Right lobe of liver (tissue), 6 donors: ENCODE measurements at regions of chr1 and their contacts with region 1.

Region 1: DNA sequence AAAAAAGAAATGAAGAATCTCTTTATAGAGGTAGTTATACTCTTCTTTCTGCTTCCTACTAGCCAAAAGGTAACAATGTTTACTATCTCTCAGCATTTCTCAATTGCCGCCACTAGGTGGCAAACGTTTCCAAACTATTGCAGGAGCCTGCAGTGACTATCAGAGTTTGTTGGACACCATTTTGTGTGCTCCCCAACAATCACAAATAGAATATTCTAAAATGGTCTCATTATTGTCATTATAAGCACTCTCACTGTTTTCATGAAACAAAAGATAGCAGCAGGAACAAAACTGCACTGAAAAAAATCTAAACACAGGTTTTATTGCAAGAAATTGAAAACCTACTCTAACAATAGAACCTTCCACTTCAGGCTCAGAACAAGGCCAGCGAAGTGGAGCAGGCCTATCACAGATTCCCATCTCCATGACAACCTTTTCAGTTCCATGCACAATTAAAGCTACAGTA is 83.9 kb upstream of the PLPPR4 start:
- DNase-seq: peak in 2 of 3 donors; percentile 50 to 76
- ATAC-seq: peak; percentile 97 to 99 (median 99)
- H3K4me3 ChIP-seq: no peak overlapping the region
- H3K27ac ChIP-seq: no peak overlapping the region
- H3K4me1 ChIP-seq: no peaks in the 10 kb centered on the region
- H3K27me3 ChIP-seq: no peaks in the 10 kb centered on the region
- CTCF ChIP-seq: peak; percentile 81 to 87 (median 83)
- POLR2A ChIP-seq: no peak

Region 2: DNA sequence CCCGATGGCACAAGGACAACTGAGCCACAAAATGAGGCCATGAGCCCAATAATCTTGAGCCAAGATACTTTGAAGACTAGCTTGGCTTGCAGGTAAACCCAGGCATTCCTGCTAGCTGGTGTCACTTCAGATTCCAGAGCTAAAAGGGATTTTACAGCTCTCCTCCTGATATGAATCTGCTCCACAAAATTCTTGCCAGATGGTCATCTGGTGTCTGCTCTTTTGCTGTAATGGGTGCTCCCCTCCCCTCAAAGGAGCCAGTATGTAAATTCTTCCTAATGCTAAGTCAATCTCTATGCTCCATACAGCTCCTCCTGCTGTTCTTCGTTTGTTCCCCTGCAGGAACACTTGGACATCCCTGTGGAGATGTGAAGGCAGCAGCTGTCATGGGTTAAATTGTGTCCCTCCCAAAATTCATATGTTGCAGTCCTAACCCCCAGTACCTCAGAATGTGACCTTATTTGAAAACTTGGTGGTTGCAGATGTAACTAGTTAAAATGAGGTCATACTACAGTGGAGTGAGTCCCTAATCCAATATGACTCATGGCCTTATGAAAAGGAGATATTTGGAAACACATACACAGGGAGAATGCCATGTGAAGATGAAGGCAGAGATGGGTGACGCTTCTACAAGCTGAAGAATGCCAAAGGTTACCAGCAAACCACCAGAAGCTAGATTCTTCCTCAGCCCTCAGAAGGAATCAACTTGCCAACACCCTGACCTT is 285.0 kb after region 1 on chr1:
- intact Hi-C with region 1: loop called (anchors 5 to 10 kb)
- DNase-seq: no peak
- ATAC-seq: no peak
- H3K4me3 ChIP-seq: no peak overlapping the region
- H3K27ac ChIP-seq: no peak overlapping the region
- H3K4me1 ChIP-seq: no peaks in the 10 kb centered on the region
- H3K27me3 ChIP-seq: no peaks in the 10 kb centered on the region
- CTCF ChIP-seq: no peak
- POLR2A ChIP-seq: no peak

Region 3: GRCh38 chr1:99472893-99473292 is 292.5 kb after region 1 on chr1:
- intact Hi-C with region 1: loop called (anchors 5 to 10 kb)
- DNase-seq: no peak
- ATAC-seq: no peak
- H3K4me3 ChIP-seq: no peak overlapping the region
- H3K27ac ChIP-seq: no peak overlapping the region
- H3K4me1 ChIP-seq: no peaks in the 10 kb centered on the region
- H3K27me3 ChIP-seq: no peaks in the 10 kb centered on the region
- CTCF ChIP-seq: no peak
- POLR2A ChIP-seq: no peak